Activated T-helper 2 cell treated with anti-CD3 and anti-CD28 coated beads, Interferon-gamma antibody, Interleukin-2, Interleukin-4, amounts not matched to agents 10 μg/mL and 5 μg/mL and 100 μg/mL, durations not matched to agents 14 hours and 24 hours and 36 hours (primary cell): ENCODE measurements at regions of chr16 and their contacts with region 1.

Region 1: GRCh38 chr16:2883027-2883851 is at the start of gene FLYWCH2:
- DNase-seq: peak; percentile 100
- H3K4me3 Mint-ChIP-seq: peak within 1 kb of the TSS; percentile 86
- H3K27ac Mint-ChIP-seq: peak within 1 kb of the TSS; percentile 94
- H3K4me1 Mint-ChIP-seq: peaks cover 14% of the 10 kb centered on the region
- H3K27me3 Mint-ChIP-seq: peaks cover 2% of the 10 kb centered on the region
- total RNA-seq, gene FLYWCH2: 21.0 and 23.6 TPM in 2 replicates

Region 2: DNA sequence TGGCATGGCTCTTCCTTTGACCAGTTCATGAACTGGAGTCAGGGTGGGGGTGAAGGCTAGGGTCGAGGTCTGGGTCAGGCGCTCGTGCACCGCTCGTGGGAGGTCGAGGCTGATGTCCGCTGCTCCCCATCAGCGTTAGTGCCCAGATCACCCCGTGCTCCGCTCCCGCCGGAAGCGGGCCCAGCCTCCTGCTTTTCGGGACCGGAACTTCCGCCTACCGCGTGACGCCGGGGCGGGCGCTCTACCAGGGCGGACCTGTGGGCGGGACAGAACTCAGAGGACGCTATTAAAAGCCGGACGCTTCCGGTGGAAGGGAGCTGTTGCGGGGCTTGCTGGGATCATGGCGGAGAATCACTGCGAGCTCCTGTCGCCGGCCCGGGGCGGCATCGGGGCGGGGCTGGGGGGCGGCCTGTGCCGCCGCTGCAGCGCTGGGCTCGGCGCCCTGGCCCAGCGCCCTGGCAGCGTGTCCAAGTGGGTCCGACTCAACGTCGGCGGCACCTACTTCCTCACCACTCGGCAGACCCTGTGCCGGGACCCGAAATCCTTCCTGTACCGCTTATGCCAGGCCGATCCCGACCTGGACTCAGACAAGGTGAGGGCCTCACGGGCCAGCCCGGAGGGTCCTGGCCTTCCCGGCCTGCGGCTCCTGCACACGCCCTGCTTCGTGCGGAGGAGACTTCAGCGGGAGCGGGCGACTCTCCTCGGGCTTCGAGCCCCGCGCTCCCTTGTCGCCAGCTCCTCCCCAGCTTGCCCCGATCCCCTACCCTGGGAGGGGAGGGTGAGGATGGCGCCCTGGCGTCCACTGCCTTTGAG is 200.8 kb before region 1 on chr16 and contains the start of gene KCTD5:
- intact Hi-C with region 1: loop called (anchors 5 kb)
- DNase-seq: peak; percentile 96
- H3K4me3 Mint-ChIP-seq: peak within 1 kb of the TSS; percentile 98
- H3K27ac Mint-ChIP-seq: peak within 1 kb of the TSS; percentile 91
- H3K4me1 Mint-ChIP-seq: peaks cover 18% of the 10 kb centered on the region
- H3K27me3 Mint-ChIP-seq: no peaks in the 10 kb centered on the region
- total RNA-seq, gene KCTD5: 65.5 and 68.5 TPM in 2 replicates

Region 3: DNA sequence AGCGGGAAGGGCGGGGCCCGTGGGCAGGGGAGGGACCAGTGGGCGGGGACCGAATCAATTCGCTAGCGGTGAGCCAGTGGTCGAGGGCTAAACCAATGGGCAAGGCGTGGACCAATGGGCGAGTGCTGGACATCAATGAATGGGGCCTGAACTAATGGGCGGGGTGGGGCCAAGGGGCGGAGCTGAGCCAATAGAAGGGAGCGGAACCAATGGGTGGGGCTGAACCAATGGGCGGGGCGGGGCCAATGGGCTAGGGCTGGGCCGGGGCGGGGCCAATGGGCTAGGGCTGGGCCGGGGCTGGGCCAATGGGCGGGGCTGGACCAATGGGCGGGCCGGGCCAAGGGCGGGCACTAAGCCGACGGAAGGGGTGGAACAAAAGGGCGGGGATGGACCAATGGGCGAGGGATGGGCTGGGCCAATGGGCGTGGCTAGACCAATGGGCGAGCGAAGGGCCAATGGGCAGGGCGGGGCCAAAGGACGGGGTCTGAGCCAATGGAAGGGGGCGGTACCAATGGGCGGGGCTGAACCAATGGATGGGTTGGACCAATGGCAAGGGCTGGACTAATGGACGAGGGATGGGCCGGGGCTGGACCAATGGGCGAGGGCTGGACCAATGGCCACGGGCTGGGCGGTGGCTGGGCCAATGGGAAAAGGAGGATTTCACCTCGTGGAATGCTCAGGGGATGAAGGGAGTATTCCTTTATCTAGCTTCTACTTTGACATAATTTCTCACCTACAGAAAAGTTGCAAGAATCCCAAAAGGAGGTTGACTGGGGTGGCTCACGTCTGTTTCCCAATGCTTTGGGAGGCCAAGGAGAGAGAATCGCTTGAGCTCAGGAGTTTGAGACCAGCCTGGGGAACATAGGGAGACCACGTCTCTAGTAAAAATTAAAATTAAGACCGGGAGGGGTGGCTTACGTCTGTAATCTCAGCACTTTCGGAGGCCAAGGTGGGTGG is 22.5 kb after region 1 on chr16:
- intact Hi-C with region 1: loop called (anchors 1 kb)
- DNase-seq: peak; percentile 95
- H3K4me3 Mint-ChIP-seq: peak overlapping the region; percentile 92
- H3K27ac Mint-ChIP-seq: peak overlapping the region; percentile 58
- H3K4me1 Mint-ChIP-seq: peaks cover 19% of the 10 kb centered on the region
- H3K27me3 Mint-ChIP-seq: peaks cover 4% of the 10 kb centered on the region

Region 4: DNA sequence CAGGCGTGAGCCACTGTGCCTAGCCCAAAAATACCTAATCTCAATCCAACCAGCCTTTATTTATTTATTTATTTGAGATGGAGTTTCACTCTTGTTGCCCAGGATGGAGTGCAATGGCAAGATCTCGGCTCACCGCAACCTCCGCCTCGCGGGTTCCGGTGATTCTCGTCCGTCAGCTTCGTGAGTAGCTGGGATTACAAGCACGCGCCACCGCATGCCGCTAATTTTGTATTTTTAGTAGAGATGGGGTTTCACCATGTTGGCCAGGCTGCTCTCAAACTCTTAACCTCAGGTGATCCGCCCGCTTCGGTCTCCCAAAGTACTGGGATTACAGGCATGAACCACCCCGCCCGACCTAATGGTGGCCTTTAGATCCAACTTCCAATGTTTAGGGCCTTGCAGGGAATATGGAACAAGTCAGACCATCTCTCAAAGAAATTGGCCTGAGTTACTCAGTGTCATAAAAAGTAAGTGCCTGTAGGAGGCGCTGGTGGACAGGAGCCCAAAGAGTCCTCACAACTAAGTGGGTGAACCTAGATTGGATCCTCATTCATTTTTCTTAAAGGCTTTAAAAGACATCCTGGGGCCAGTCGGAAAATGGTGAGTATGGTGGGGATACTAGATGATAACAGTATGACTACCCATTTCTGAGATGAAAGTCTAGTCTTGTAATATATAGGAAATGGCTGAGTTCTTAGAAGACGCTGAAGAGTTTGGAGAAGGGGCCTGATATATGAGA is 211.2 kb after region 1 on chr16:
- intact Hi-C with region 1: no loop called
- DNase-seq: peak; percentile 41
- H3K4me3 Mint-ChIP-seq: no peak overlapping the region
- H3K27ac Mint-ChIP-seq: peak overlapping the region; percentile 9
- H3K4me1 Mint-ChIP-seq: peaks cover 24% of the 10 kb centered on the region
- H3K27me3 Mint-ChIP-seq: peaks cover 4% of the 10 kb centered on the region